ENCODE measurements at regions of chr21 and their contacts with region 1.

Region 1: GRCh38 chr21:33479679-33480480 is at the start of gene TMEM50B:
- DNase-seq: peak; percentile 98
- ATAC-seq: peak; percentile 99
- total RNA-seq, gene TMEM50B: 35.1 TPM

Region 2: DNA sequence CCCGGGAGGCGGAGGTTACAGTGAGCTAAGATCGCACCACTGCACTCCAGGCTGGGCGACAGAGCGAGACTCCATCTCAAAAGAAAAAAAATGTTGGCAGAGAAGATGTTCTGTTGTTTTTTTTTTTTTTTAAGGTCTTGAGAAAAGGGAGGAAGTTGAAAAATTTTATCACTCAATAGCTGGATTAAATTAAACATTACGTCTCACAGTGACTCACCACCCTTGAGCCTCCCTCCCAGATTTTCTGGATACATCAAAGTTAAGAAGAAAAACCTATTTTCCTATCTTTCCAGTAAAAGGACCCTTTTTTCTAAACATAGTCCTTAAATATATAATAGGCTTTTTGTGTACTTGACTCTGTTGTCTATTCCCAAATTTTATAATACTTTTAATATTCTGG is 119.6 kb before region 1 on chr21:
- intact Hi-C with region 1: no loop called
- DNase-seq: no peak
- ATAC-seq: no peak

Region 3: DNA sequence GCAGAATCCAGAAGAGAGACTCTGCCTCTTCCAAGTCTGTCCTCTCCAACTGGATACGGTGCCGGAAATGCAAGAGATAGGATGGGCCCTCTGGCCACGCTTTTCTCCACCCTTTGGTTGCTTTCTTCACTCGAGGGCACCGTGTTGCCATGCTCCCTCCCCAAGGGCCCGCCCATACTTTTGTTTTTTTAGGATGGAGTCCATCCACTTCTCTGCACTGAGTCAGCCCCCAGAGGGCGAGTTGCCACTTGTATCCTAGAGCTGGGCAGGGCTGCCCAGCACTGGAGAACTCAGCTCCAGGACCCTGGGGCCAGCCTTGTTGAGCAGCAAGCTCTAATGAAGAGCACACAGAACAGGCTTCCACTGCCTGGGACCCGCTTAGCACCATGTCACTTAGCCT is 51.2 kb before region 1 on chr21:
- intact Hi-C with region 1: no loop called
- DNase-seq: no peak
- ATAC-seq: peak; percentile 26

Region 4: GRCh38 chr21:33491373-33492102 is 11.7 kb after region 1 on chr21 and contains the start of gene DNAJC28:
- intact Hi-C with region 1: loop called (anchors 1 kb)
- DNase-seq: peak; percentile 97
- ATAC-seq: peak; percentile 99
- total RNA-seq, gene DNAJC28: 7.6 TPM

Region 5: DNA sequence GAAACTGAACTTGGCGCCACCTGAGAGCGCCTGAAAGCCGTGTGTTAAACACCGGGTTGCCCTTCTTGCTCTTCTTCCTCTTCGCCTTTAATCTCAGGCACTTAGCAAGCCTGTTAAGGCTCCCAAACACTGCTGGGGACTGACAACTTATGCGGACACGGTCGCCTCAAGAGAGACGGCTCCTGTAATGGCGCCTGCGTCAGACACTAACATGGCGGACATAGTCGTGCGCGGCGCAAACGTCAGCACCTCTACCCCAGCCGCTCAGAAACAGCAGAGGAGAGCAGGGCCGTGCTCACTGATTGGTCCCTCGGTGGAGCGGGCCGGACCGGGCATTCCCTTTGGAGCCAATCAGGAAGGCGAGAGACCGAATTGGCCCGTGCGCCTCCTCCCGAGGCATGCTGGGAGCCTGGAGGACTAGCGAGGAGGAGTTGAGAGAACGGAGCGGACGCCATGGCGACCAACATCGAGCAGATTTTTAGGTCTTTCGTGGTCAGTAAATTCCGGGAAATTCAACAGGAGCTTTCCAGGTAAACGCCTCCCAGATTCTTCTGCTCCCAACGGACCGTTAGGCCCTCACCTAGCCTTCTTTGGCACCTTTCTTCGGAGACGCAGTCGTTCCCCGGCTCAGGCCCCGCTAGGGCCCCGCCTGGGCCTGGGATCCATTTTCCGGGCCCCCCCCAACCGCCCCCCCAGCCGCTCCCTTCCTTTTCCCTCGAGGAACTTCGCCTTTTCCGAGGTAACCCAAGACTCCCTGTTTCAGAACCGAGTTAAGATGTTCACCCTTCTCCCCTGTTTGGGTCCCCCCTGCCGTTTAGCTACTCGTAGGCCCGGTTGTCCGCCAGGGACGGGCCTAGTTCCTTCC is 63.0 kb after region 1 on chr21 and contains the start of gene SON:
- intact Hi-C with region 1: loop called (anchors 2 kb)
- DNase-seq: peak; percentile 100
- ATAC-seq: peak; percentile 99
- total RNA-seq, gene SON: 136 TPM